Ascending aorta (tissue), 2 donors: ENCODE measurements at regions of chr5 and their contacts with region 1.

Region 1: DNA sequence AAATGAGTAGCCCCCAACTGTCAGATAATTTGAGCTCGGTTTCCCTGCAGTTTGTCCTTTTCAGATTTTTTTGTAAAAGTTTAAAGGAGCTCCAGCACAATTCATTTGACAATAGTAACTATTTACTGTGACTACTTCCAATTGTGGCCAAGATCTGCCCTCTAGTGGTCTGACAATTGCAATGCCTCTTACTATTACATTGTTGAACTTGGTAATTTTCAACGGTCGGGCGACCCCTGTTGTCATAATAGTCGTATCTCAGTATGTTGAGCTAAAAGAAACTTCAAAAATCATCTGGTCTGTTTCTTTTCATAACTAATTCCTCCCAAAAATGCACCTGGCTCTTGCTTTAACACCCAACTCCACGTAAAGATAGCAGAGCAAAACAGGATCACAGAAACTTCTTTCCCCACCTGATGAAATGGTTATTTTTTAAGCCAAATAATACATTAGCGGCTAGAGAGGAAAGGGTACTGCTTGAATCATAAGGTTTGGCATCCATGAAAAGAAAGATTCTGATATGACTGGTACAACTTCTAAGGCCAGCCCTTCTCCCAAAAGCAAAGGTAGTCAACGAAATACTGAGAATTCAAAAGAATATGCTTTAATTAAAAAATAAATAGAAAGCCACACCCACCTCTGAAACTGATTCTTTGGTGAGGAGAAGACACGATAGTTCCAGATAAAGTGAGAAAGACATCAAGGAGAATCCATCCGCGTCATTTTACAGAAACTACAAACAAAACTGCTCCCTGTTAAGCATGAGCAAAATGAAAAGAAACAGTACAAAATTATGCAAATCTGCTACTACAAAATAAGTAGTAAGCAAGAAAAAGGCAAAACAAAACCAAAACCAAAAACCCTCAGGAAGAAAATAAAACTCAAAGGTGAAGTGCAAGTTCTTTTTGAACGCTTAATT is 76.9 kb upstream of the HTR4 start:
- DNase-seq: peak in 1 of 2 donors; percentile 88
- H3K4me3 ChIP-seq: peak overlapping the region; percentile 36 to 47
- H3K27ac ChIP-seq: no peak overlapping the region
- H3K4me1 ChIP-seq: peaks cover 0 to 11% of the 10 kb centered on the region in 2 donors
- H3K27me3 ChIP-seq: no peaks in the 10 kb centered on the region
- CTCF ChIP-seq: peak; percentile 82 to 93 (median 87)

Region 2: DNA sequence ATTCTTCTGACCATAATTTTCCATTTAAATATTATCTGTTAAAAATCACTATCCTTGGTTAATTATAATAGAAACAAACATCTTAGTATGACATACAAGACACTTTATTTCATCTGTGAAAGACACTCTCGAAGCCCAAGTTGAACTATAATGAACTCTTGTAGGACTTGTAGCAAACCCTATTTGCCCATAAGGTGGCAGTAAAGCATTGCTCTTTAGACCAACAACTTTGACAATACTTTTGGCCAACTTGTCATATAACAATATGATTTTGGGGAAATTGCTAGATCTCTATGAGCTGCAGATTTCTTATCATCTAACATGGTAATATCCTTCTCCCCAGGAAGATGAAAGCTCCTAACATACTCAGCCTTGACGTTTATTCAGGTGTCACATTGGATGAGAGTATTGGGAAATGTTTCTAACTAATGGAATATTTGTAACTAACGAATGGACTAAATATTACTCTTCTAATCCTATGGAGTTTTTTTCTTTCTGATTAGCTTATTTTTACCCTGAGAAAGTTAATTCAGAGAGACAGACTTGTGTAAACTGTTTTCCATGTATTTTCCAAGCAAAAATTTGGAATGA is 551.9 kb before region 1 on chr5:
- intact Hi-C with region 1: loop called (anchors 5 kb)
- DNase-seq: no peak
- H3K4me3 ChIP-seq: no peak overlapping the region
- H3K27ac ChIP-seq: no peak overlapping the region
- H3K4me1 ChIP-seq: no peaks in the 10 kb centered on the region
- H3K27me3 ChIP-seq: no peaks in the 10 kb centered on the region
- CTCF ChIP-seq: peak; percentile 21 to 60 (median 36)

Region 3: DNA sequence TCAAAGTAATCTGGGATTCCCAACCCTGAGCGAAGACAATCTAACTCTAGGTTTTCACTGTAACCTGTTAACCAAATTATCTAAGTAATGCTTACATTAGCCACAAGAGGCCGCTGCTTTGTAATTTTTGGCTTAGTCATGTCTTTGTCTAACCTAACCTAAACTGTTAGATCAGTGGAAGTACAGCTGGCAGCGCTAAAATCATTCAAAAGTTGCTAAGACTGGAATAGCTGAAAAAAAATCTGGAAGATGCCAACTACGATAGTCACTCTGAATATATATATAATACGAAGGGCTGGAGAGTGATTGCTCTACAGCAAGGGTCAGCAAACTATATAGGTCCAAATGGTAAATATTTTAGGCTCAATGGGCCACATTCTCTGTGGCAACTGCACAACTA is 287.2 kb before region 1 on chr5:
- intact Hi-C with region 1: loop called (anchors 1 kb)
- DNase-seq: peak in 1 of 2 donors; percentile 69
- H3K4me3 ChIP-seq: no peak overlapping the region
- H3K27ac ChIP-seq: no peak overlapping the region
- H3K4me1 ChIP-seq: no peaks in the 10 kb centered on the region
- H3K27me3 ChIP-seq: no peaks in the 10 kb centered on the region
- CTCF ChIP-seq: peak; percentile 65 to 69 (median 67)

Region 4: GRCh38 chr5:148623741-148624140 is 107.5 kb before region 1 on chr5:
- intact Hi-C with region 1: no loop called
- DNase-seq: no peak
- H3K4me3 ChIP-seq: no peak overlapping the region
- H3K27ac ChIP-seq: no peak overlapping the region
- H3K4me1 ChIP-seq: no peaks in the 10 kb centered on the region
- H3K27me3 ChIP-seq: no peaks in the 10 kb centered on the region
- CTCF ChIP-seq: no peak

Region 5: GRCh38 chr5:148957591-148958202 is 226.5 kb after region 1 on chr5:
- intact Hi-C with region 1: no loop called
- DNase-seq: no peak
- H3K4me3 ChIP-seq: no peak overlapping the region
- H3K27ac ChIP-seq: no peak overlapping the region
- H3K4me1 ChIP-seq: no peaks in the 10 kb centered on the region
- H3K27me3 ChIP-seq: no peaks in the 10 kb centered on the region
- CTCF ChIP-seq: peak; percentile 32 to 72 (median 53)

Region 6: DNA sequence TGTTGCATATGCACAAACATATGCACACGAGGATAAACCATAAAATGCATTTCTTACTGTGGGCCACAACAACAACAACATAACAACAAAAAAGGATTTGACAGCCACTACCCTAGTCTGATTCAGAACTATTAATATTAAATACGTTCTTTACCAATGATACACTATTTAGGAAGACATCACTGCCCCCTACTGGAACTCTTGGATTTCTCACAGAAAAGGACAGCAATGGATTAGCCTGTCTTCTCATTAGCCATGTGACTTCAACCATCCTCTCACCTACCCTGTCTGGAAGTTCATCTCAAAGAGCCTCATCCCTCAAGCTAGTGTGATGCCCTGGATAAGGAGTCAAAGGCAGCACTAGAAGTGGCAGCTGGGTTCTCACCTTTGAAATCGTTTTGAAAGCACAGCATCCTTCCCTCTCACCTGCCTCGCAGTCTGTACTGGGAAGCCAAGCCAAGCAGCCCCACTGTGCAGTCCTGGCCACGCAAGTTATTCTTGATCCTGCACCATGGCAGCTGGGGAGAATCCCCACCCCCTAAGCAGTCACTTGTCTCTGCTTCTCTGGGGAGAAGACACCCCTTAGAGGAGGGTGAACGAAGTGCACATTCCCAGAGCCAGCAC is 267.1 kb after region 1 on chr5:
- intact Hi-C with region 1: loop called (anchors 5 kb)
- DNase-seq: no peak
- H3K4me3 ChIP-seq: no peak overlapping the region
- H3K27ac ChIP-seq: no peak overlapping the region
- H3K4me1 ChIP-seq: peaks cover 0 to 3% of the 10 kb centered on the region in 2 donors
- H3K27me3 ChIP-seq: no peaks in the 10 kb centered on the region
- CTCF ChIP-seq: peak; percentile 62 to 70 (median 67)

Region 7: GRCh38 chr5:149114403-149115312 is 383.5 kb after region 1 on chr5:
- intact Hi-C with region 1: loop called (anchors 2 kb)
- DNase-seq: no peak
- H3K4me3 ChIP-seq: no peak overlapping the region
- H3K27ac ChIP-seq: no peak overlapping the region
- H3K4me1 ChIP-seq: no peaks in the 10 kb centered on the region
- H3K27me3 ChIP-seq: no peaks in the 10 kb centered on the region
- CTCF ChIP-seq: peak; percentile 57 to 71 (median 60)

Region 8: GRCh38 chr5:149567226-149567625 is 836.0 kb after region 1 on chr5:
- intact Hi-C with region 1: no loop called
- DNase-seq: no peak
- H3K4me3 ChIP-seq: no peak overlapping the region
- H3K27ac ChIP-seq: no peak overlapping the region
- H3K4me1 ChIP-seq: peaks cover 0 to 14% of the 10 kb centered on the region in 2 donors
- H3K27me3 ChIP-seq: no peaks in the 10 kb centered on the region
- CTCF ChIP-seq: no peak